Calu3 (cell line): ENCODE measurements at regions of chr3 and their contacts with region 1.

Region 1: DNA sequence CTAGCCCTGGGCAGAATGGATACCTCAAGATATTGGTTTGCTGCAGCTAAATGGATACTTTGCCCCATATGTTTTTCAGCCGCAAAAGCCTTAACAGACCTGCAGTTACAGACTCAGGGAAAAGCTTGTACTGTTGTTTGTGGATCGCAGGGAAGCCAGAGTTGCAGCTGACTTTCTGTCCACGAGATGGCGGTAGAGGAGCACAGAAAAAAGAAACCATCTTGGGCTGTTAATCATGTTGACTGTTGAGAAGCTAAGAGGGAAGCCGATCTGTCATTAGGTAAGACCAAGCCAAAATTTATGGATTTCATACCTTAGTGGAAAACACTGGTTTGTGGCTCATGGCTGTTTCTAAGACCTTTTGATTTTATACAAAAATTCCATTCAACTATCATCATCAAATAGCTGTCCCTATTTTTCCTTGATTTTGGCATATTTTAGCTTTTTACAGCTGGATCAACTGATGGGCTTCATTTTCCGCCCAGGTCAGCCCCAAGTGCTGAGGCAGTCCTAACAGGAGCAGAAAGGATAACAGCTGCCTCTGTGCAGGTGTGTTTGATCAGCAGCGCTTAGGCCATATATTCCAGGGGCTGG is 205.7 kb upstream of the ZPLD1 start:
- DNase-seq: peak; percentile 77
- H3K4me3 Mint-ChIP-seq: no peak overlapping the region
- H3K27ac Mint-ChIP-seq: no peak overlapping the region
- H3K4me1 Mint-ChIP-seq: peaks cover 26% of the 10 kb centered on the region
- H3K27me3 Mint-ChIP-seq: no peaks in the 10 kb centered on the region
- CTCF ChIP-seq: peak; percentile 70

Region 2: DNA sequence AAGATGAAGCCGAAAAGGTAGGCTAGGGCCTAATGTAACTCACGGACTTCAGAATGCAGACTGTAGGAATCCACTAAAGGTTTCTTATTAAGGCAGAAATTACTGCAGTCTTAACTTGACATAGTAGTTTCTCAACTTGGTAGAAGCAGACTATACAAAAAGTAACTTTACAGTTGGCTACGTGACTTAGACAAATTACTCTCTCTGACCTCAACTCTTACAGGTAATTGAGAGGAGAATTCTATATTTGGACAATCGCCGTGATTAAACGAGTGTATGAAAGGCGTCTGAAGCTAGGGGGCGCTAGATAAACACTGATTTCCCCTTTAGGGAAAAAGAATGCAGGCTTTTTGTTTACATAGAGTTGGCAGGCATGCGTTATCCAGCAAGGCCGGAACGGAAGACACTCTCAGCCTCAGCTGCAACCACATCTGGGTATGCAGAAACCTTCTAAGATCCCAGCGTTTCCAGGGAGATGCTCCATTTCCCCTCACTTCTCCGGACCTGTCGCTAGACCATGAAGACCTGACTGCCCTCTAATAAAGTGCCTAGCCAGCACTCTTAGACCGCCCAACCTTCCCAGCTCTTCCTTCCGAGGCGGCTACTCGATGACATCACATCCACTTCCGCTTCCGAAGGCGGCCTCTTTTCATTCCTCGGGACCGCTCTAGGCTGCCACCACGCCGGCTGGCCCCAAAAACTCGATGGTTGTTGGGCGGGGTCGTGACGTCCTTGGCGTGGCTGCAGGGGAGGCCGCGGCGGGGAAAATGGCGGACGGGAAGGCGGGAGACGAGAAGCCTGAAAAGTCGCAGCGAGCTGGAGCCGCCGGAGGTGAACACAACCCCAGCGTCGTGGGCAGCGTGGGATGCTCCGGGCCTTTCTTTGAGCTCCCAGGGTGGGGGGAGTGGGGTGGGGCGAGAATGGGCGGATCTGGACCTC is 655.4 kb before region 1 on chr3 and contains the start of gene PCNP:
- CTCF ChIA-PET with region 1: interaction called, 3 read pairs
- intact Hi-C with region 1: loop called (anchors 5 kb)
- DNase-seq: peak; percentile 98
- H3K4me3 Mint-ChIP-seq: peak within 1 kb of the TSS; percentile 97
- H3K27ac Mint-ChIP-seq: peak within 1 kb of the TSS; percentile 99
- H3K4me1 Mint-ChIP-seq: peaks cover 22% of the 10 kb centered on the region
- H3K27me3 Mint-ChIP-seq: no peaks in the 10 kb centered on the region
- CTCF ChIP-seq: peak; percentile 74
- total RNA-seq, gene PCNP: 135 and 147 TPM in 2 replicates

Region 3: GRCh38 chr3:101676765-101677435 is 552.3 kb before region 1 on chr3 and contains the start of gene ZBTB11:
- CTCF ChIA-PET with region 1: interaction called, 9 read pairs
- intact Hi-C with region 1: loop called (anchors 2 kb)
- DNase-seq: peak; percentile 99
- H3K4me3 Mint-ChIP-seq: peak within 1 kb of the TSS; percentile 80
- H3K27ac Mint-ChIP-seq: peak within 1 kb of the TSS; percentile 85
- H3K4me1 Mint-ChIP-seq: peaks cover 23% of the 10 kb centered on the region
- H3K27me3 Mint-ChIP-seq: no peaks in the 10 kb centered on the region
- CTCF ChIP-seq: no peak
- total RNA-seq, gene ZBTB11: 34.8 and 36.5 TPM in 2 replicates

Region 4: GRCh38 chr3:101825904-101826445 is 403.2 kb before region 1 on chr3:
- CTCF ChIA-PET with region 1: no interaction called
- intact Hi-C with region 1: no loop called
- DNase-seq: no peak
- H3K4me3 Mint-ChIP-seq: peak overlapping the region; percentile 79
- H3K27ac Mint-ChIP-seq: peak overlapping the region; percentile 88
- H3K4me1 Mint-ChIP-seq: peaks cover 17% of the 10 kb centered on the region
- H3K27me3 Mint-ChIP-seq: no peaks in the 10 kb centered on the region
- CTCF ChIP-seq: no peak

Region 5: DNA sequence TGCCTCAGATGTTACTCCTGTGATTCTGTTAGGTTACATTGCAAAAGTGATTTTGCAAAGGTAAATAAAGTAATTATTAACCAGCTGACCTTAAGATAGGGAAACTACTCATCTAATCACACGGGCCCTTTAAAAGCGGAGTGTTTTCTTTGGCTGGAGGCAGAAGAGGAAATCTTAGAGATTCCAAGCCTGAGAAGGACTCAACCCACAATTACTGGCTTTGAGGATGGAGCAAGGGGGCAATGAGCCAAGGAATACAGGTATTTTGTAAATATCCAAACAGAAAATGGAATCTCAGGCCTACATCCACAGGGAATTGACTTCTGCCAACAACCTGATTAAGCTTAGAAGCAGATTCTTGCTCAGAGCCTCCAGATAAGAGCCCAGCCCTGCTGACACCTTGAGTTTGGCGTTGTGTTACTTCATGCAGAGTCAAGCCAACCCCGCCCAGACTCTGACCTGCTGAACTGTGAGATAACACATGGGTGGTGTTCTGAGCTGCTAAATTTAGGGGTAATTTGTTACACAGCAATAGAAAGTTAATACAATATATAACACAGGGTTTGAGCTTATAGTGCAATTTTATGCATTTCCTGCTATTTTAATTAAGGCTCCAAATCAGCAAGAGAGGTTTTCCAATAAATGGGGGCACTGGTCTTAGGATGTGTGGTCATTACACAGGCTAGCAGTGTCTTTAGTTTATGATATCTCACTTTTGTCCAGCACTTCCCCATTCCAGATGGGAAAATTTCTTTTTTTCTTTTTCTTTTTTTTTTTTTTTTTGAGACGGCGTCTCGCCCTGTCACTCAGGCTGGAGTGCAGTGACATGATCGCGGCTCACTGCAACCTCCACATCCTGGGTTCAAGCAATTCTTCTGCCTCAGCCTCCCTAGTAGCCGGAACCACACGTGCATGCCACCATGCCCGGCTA is 360.4 kb before region 1 on chr3:
- CTCF ChIA-PET with region 1: interaction called, 6 read pairs
- intact Hi-C with region 1: loop called (anchors 2 kb)
- DNase-seq: peak; percentile 50
- H3K4me3 Mint-ChIP-seq: peak overlapping the region; percentile 28
- H3K27ac Mint-ChIP-seq: peak overlapping the region; percentile 95
- H3K4me1 Mint-ChIP-seq: peaks cover 51% of the 10 kb centered on the region
- H3K27me3 Mint-ChIP-seq: no peaks in the 10 kb centered on the region
- CTCF ChIP-seq: no peak

Region 6: DNA sequence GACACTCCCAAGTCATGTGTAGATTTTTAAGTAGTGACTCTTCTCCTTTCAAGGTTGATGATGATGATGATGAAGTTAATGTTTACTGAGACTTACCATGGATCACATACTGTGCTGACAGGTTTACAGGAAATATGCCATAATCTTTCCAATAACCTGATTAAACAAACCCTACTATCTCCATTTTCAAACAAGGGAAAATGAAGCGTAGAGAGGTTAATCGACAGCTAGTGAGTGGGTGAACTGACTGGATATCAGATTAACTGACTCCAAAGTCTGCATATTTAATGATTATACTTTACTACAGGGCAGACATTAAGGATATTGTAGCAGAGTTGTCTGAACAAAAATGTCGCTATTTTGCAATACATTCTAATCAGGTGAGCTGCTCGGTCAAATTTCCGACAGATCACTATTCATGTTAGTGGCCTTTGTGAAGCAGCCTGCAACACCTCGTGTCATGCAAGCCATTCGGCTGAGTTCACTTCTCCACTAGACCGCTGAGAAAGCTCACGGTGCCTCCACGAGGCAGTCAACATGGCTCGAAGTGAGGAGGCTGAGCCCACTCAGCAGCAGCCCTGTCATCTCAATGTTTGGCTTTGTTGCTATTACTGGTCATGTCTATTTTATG is 115.6 kb before region 1 on chr3:
- CTCF ChIA-PET with region 1: interaction called, 22 read pairs
- intact Hi-C with region 1: loop called (anchors 1 kb)
- DNase-seq: peak; percentile 79
- H3K4me3 Mint-ChIP-seq: peak overlapping the region; percentile 30
- H3K27ac Mint-ChIP-seq: peak overlapping the region; percentile 97
- H3K4me1 Mint-ChIP-seq: peaks cover 44% of the 10 kb centered on the region
- H3K27me3 Mint-ChIP-seq: no peaks in the 10 kb centered on the region
- CTCF ChIP-seq: no peak

Region 7: GRCh38 chr3:102180291-102181039 is 48.7 kb before region 1 on chr3:
- CTCF ChIA-PET with region 1: interaction called, 31 read pairs
- intact Hi-C with region 1: loop called (anchors 2 kb)
- DNase-seq: no peak
- H3K4me3 Mint-ChIP-seq: no peak overlapping the region
- H3K27ac Mint-ChIP-seq: no peak overlapping the region
- H3K4me1 Mint-ChIP-seq: peaks cover 23% of the 10 kb centered on the region
- H3K27me3 Mint-ChIP-seq: no peaks in the 10 kb centered on the region
- CTCF ChIP-seq: no peak

Region 8: DNA sequence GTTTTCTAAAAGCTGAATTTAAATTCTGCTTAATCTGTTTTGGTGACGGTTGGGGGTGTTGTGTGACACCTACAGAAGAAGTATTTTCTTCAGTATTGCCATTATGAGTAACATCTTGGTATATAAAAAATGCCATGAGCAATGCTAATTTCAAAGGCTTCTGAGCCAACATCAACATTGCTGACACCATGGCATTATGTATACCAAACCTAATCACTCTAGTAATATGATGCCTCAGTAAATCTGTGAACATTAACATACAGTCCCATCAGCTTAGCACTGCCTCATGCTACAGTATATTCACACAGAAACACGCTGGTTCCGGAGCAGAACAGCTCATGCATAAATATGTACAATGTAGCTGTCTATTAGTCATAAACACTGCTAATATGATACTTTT is 281.5 kb after region 1 on chr3:
- CTCF ChIA-PET with region 1: no interaction called
- intact Hi-C with region 1: no loop called
- DNase-seq: no peak
- H3K4me3 Mint-ChIP-seq: no peak overlapping the region
- H3K27ac Mint-ChIP-seq: no peak overlapping the region
- H3K4me1 Mint-ChIP-seq: peaks cover 8% of the 10 kb centered on the region
- H3K27me3 Mint-ChIP-seq: no peaks in the 10 kb centered on the region
- CTCF ChIP-seq: no peak

Region 9: GRCh38 chr3:102536456-102536855 is 307.3 kb after region 1 on chr3:
- CTCF ChIA-PET with region 1: interaction called, 75 read pairs
- intact Hi-C with region 1: loop called (anchors 1 kb)
- DNase-seq: no peak
- H3K4me3 Mint-ChIP-seq: no peak overlapping the region
- H3K27ac Mint-ChIP-seq: no peak overlapping the region
- H3K4me1 Mint-ChIP-seq: no peaks in the 10 kb centered on the region
- H3K27me3 Mint-ChIP-seq: no peaks in the 10 kb centered on the region
- CTCF ChIP-seq: no peak